ENCODE measurements at regions of chr5 and their contacts with region 1.

Region 1: DNA sequence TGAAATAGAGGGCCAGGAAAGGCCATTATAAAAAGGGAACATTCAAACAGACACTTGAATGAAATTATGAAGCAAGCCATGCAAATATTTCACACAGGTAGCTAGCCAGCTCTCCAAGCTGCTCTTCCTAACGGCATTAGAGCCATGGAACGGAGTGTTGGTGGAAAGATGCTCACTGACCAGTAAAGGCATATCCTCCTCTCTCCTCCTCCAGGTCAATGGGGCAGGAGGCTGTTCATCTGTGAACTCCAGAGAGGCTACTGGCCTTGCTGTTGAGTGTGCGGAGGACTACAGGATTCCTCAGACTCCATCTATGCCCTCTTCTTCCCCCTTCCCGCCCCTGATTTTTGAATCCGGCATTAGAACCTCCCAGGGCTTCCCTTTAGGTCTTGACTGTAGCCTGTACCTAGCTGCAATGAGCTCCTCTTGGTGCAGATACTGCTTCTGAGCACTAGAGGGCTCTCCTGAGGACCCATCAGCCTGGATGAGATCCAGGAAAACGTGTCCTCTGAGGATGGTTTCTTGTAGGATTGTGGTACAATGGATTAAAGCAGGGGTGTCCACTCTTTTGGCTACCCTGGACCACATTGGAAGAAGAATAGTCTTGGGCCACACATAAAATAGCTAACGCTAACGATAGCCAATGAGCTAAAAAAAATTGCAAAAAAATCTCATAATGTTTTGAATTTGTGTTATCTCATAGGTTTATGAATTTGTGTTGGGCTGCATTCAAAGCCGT is 162.2 kb downstream of the SREK1 start:
- DNase-seq: peak; percentile 78
- H3K4me3 ChIP-seq: peak overlapping the region in 1 of 2 experiments; percentile 44; a peak in 1 of 4 replicates
- H3K27ac ChIP-seq: no peak overlapping the region
- H3K4me1 ChIP-seq: no peaks in the 10 kb centered on the region
- H3K27me3 ChIP-seq: no peaks in the 10 kb centered on the region
- CTCF ChIP-seq: peak; percentile 84
- EP300 ChIP-seq: no peak
- RAD21 ChIP-seq: peak; percentile 69

Region 2: DNA sequence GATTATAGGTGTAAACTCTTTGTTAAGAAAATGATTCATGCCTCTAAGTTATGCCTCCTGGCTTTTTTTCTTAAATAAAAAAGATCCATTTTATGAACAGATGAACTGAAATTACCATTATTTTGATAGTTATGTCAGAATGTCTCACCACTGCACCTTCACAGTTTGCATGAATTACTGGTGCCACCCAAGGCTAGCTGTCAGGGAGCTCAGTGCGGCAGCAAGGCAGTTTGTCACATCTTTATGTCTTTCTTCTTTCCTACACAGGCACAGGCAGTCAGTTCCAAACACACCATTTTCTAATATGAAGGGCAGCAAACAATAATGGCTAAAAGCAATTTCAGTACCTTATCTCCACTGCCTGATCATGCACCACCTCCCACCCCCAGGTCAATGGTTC is 14.5 kb before region 1 on chr5:
- CTCF ChIA-PET with region 1: interaction called, 23 read pairs
- POLR2A ChIA-PET with region 1: no interaction called
- DNase-seq: no peak
- H3K4me3 ChIP-seq: no peak overlapping the region
- H3K27ac ChIP-seq: no peak overlapping the region
- H3K4me1 ChIP-seq: no peaks in the 10 kb centered on the region
- H3K27me3 ChIP-seq: no peaks in the 10 kb centered on the region
- CTCF ChIP-seq: no peak
- EP300 ChIP-seq: no peak
- RAD21 ChIP-seq: no peak

Region 3: DNA sequence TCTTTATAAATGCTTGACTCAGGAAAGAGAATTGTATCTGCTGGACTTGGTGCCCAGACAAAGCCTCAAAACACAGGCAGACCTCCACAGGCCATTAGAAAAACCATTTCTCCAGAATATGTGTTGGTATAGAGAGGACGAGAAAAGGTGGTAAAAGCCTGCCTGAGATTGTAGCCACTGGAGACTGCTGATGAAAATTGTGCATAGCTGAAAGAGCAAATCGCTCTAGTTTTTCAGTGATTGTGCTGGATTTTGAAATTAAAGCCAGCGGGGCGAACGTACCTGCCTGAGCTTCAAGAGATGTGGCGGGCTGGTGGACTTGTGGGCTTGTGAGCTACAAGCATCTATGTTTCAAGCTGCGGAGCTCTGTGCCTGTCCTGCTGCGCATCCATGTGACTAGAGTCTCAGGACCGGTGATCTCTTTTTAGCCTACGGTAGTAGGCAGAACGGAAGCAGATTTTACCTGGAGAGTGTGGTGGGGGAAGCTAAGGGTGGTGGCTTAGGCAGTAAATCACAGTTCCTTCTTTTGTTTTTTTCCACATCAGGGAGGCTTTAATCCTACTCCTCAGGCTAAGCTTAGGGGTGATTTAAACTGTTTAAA is 31.5 kb after region 1 on chr5:
- CTCF ChIA-PET with region 1: interaction called, 12 read pairs
- POLR2A ChIA-PET with region 1: no interaction called
- DNase-seq: no peak
- H3K4me3 ChIP-seq: no peak overlapping the region
- H3K27ac ChIP-seq: no peak overlapping the region
- H3K4me1 ChIP-seq: no peaks in the 10 kb centered on the region
- H3K27me3 ChIP-seq: no peaks in the 10 kb centered on the region
- CTCF ChIP-seq: no peak
- EP300 ChIP-seq: no peak
- RAD21 ChIP-seq: no peak

Region 4: DNA sequence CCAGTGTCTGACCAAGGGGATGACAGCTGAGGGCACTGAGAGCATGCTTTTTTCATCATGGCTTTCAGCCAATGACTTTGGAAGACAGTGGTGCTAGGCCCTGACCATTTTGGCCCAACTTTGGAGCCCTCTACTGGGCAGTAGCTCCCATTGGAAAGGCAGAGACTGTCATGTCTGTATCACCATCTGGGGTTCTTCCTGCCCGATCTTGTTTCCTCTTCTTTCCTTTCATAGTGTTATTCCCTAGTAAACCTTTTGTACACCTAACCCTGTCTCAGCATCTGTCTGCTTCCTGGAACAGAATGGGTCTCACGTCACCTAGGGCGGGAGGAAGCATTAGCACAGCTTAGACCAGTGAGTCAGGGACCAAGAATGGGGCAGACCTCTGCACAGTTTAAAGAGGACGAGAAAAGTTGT is 192.5 kb after region 1 on chr5:
- CTCF ChIA-PET with region 1: interaction called, 13 read pairs
- POLR2A ChIA-PET with region 1: no interaction called
- DNase-seq: peak; percentile 31
- H3K4me3 ChIP-seq: no peak overlapping the region
- H3K27ac ChIP-seq: no peak overlapping the region
- H3K4me1 ChIP-seq: no peaks in the 10 kb centered on the region
- H3K27me3 ChIP-seq: no peaks in the 10 kb centered on the region
- CTCF ChIP-seq: peak; percentile 28
- EP300 ChIP-seq: no peak
- RAD21 ChIP-seq: peak; percentile 60

Region 5: DNA sequence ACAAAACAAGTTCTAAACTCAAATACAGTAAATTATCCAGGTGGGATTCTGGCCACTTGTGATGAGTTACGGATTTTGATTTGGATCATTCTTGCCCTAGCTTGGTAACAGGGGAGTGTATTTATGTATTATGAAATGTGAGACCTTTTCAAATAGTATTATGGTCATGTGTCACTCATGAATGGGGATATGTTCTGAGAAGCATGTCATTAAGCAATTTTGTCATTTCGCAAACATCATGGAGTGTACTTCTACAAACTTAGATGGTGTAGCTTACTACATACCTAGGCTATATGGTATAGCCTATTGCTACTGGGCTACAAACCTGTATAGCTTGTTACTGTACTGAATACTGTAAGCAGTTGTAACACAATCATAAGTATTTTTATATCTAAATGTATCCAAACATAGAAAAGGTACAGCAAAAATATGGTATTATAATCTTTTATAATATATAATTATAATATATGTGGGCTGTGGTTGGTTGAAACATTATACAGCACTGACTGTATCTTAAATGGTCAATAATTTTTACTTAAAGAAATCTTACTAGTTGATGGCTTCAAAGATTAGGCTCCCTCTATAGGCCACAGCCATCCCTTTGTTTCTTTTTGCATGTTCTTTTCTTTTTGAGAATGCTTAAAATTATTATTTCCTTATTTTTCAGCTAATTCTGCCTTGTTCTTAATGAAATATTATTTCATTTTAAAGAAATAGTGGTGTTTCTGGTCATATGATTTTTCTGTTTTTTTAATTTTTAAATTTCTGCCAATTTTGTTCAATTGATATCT is 418.3 kb after region 1 on chr5:
- CTCF ChIA-PET with region 1: interaction called, 10 read pairs
- POLR2A ChIA-PET with region 1: no interaction called
- DNase-seq: no peak
- H3K4me3 ChIP-seq: no peak overlapping the region
- H3K27ac ChIP-seq: no peak overlapping the region
- H3K4me1 ChIP-seq: no peaks in the 10 kb centered on the region
- H3K27me3 ChIP-seq: no peaks in the 10 kb centered on the region
- CTCF ChIP-seq: peak; percentile 35
- EP300 ChIP-seq: no peak
- RAD21 ChIP-seq: no peak

Region 6: DNA sequence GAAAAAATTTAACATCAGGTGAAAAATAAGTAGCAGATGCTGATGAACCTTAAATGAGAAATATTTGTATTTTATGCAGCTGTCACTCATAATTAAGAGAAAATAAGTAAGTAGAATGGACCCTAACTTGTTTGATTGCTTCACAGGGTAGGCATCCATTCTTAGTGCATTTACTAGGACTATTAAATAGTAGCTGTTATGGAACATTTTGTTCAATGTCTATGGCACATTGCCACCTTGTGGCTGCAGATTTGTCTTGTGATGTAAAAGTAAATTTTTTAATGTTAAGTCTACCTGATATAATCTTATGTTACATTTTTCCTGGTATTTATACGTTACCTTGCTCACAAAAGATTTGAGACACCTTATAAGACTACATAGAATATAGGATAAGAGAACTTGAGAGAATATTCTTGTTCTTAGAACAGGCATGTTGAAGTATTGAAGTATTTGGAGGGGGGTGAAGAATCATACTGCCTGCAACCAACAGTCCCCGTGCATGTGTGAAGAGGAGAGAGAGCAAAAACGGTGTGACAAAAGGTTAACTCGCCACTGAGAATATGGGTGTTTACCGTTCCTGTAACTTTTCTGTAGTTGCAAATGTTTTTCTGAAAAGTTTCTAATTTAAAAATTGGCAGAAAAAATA is 451.0 kb after region 1 on chr5:
- CTCF ChIA-PET with region 1: interaction called, 236 read pairs
- POLR2A ChIA-PET with region 1: no interaction called
- DNase-seq: peak; percentile 50
- H3K4me3 ChIP-seq: no peak overlapping the region
- H3K27ac ChIP-seq: no peak overlapping the region
- H3K4me1 ChIP-seq: no peaks in the 10 kb centered on the region; a peak in 1 of 4 replicates
- H3K27me3 ChIP-seq: no peaks in the 10 kb centered on the region; the same call in 1 of the 2 replicates
- CTCF ChIP-seq: peak; percentile 65
- EP300 ChIP-seq: no peak
- RAD21 ChIP-seq: peak; percentile 87

Measured in SK-N-SH (cell line).